OCI-LY7 (cell line): ENCODE measurements at regions of chr2 and their contacts with region 1.

Region 1: GRCh38 chr2:45458909-45459563 is 152.0 kb downstream of the SRBD1 start:
- DNase-seq: peak; percentile 36
- H3K4me3 ChIP-seq: peak overlapping the region; percentile 44
- H3K27ac ChIP-seq: peak overlapping the region; percentile 99
- H3K4me1 ChIP-seq: peaks cover 85% of the 10 kb centered on the region
- CTCF ChIP-seq: no peak

Region 2: DNA sequence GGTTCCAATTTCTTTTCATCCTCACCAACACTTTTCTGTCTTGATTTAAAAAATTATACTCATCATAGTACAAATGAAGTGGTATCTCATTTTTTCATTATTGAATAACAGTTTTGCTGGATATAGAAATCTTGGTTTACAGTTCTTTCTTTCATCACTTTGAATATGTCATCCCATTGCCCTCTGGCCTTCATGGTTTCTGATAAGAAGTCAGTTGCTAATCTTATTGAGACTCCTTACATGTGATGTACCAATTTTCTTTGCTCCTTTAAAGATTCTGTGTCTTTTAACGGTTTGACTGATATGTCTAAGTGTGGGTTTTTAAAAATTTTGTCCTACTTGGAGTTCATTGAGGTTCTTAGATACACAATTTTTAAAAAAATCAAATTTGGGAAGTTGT is 1148.7 kb before region 1 on chr2:
- CTCF ChIA-PET with region 1: no interaction called
- POLR2A ChIA-PET with region 1: interaction called, 11 read pairs
- intact Hi-C with region 1: no loop called
- DNase-seq: peak; percentile 6
- H3K4me3 ChIP-seq: no peak overlapping the region
- H3K27ac ChIP-seq: no peak overlapping the region
- H3K4me1 ChIP-seq: no peaks in the 10 kb centered on the region
- CTCF ChIP-seq: no peak

Region 3: DNA sequence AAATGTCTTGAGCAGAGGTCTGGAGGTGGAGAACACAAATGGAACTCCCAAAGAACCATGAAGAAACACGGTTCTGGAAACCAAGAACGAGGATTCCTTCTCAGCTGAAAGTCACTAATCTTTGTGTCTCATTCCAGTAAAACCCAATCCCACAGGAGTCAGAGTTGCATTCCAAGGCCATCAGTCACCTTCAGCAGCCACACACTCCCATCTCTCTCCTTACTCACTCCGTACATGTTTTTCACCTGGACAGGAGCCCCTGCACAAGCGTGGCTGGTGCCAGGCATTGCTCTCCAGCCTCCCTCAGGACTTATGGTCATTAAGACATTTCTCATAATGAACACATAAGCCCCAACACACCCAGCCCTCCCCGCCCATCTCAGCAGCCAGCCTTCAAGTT is 274.4 kb before region 1 on chr2:
- CTCF ChIA-PET with region 1: no interaction called
- POLR2A ChIA-PET with region 1: no interaction called
- intact Hi-C with region 1: loop called (anchors 2 kb)
- DNase-seq: no peak
- H3K4me3 ChIP-seq: no peak overlapping the region
- H3K27ac ChIP-seq: no peak overlapping the region
- H3K4me1 ChIP-seq: peaks cover 45% of the 10 kb centered on the region
- CTCF ChIP-seq: no peak

Region 4: DNA sequence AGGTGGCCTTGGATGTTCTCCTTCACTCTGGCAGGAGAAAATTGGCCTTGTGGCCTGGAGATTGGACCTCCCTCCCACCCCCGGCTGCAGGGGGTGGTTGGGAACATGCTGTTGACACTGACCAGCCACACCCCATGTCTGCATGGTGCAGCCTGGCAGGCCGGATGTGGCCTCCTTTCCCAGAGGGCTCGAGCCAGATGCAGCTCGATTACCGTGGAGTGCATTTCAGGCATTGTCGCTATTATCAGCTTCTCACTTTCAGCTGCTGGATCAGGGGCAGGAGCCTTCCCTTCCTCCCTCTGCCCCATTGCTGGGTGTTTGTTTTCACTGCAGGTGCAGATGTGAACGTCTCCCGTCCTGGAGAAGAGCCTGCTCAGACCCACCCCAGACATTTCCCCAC is 238.8 kb before region 1 on chr2:
- CTCF ChIA-PET with region 1: no interaction called
- POLR2A ChIA-PET with region 1: no interaction called
- intact Hi-C with region 1: loop called (anchors 2 kb)
- DNase-seq: no peak
- H3K4me3 ChIP-seq: no peak overlapping the region
- H3K27ac ChIP-seq: no peak overlapping the region
- H3K4me1 ChIP-seq: peaks cover 49% of the 10 kb centered on the region
- CTCF ChIP-seq: no peak

Region 5: DNA sequence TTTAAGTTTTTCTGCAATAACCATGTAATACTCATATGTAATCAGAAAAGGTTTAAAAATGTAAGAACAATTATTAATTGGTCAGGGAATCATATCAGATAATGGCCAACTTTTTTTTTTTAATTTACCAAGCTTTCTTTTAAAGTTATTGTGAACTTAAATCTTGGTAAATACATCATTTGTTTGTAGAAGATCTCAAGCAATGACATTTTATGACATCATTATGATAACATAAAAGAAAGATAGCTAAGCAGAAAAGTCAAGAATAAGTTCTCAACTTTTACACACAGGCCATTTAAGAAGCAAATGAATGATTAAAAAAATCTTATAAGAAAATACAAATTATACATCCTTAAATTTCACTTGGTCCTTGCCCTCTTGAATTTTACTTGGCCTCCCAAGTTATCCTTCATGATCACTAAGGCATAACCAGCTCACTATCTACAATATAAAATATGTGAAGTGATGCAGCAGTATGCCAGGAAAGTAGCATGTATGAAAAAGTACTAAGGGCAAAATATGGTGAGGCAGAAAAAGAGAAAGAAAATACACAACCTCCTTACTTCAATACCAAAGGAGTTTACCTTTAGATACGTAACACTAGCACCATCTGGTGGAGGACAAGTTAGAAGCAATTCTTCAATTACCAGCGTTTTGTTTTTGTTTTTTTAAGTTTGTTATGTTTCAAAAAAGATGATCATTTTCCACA is 35.4 kb after region 1 on chr2:
- CTCF ChIA-PET with region 1: no interaction called
- POLR2A ChIA-PET with region 1: interaction called, 13 read pairs
- intact Hi-C with region 1: no loop called
- DNase-seq: peak; percentile 88
- H3K4me3 ChIP-seq: no peak overlapping the region
- H3K27ac ChIP-seq: peak overlapping the region; percentile 72
- H3K4me1 ChIP-seq: peaks cover 41% of the 10 kb centered on the region
- CTCF ChIP-seq: peak; percentile 97

Region 6: GRCh38 chr2:45843136-45843535 is 384.1 kb after region 1 on chr2:
- CTCF ChIA-PET with region 1: no interaction called
- POLR2A ChIA-PET with region 1: no interaction called
- intact Hi-C with region 1: loop called (anchors 5 kb)
- DNase-seq: peak; percentile 63
- H3K4me3 ChIP-seq: no peak overlapping the region
- H3K27ac ChIP-seq: peak overlapping the region; percentile 58
- H3K4me1 ChIP-seq: peaks cover 45% of the 10 kb centered on the region
- CTCF ChIP-seq: no peak

Region 7: DNA sequence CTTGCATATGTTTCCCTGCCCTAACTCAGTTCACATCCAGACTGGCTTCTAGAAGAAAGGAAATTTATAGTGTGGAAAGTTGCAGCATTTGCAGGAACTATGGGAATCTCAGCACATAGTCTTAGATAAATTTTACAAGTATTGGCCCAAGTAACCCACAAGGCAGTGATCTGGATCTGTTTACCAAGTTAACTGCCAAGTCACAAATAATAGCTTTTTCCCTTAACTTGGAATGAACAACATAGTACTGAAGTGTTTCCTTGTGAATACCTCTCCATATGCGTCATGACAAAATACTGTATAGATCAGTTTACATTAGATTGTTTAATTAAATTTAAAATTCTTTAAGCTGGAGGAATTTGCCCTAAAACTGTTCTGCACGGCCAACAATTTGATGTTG is 582.4 kb after region 1 on chr2:
- CTCF ChIA-PET with region 1: no interaction called
- POLR2A ChIA-PET with region 1: no interaction called
- intact Hi-C with region 1: no loop called
- DNase-seq: no peak
- H3K4me3 ChIP-seq: no peak overlapping the region
- H3K27ac ChIP-seq: no peak overlapping the region
- H3K4me1 ChIP-seq: no peaks in the 10 kb centered on the region
- CTCF ChIP-seq: no peak

Region 8: GRCh38 chr2:46574457-46575355 is 1115.7 kb after region 1 on chr2:
- CTCF ChIA-PET with region 1: no interaction called
- POLR2A ChIA-PET with region 1: interaction called, 3 read pairs
- intact Hi-C with region 1: loop called (anchors 10 kb)
- DNase-seq: peak; percentile 91
- H3K4me3 ChIP-seq: peak overlapping the region; percentile 57
- H3K27ac ChIP-seq: peak overlapping the region; percentile 100
- H3K4me1 ChIP-seq: peaks cover 82% of the 10 kb centered on the region
- CTCF ChIP-seq: no peak